ENCODE measurements at regions of chr1 and their contacts with region 1.

Region 1: DNA sequence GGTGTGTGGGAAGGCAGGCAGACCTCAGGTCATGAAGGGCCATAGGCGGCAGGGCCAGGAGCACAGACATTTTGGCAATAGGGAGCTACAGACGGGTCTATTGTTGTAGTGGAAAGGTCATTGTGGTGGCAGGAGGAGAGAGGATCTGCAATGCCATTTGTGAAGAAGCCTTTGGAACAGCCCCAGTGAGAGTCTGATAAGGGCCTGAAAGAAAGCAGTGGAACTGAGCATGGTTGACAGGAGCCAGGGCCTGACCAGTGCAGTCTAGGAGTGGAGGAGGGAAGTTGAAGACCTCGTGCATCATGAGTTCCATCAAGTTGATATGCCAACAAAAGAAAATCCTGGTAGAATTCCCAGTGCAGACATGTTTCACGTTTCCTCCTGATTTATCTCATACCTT is 65.5 kb downstream of the UCK2 start:
- DNase-seq: no peak
- H3K4me3 ChIP-seq: no peak overlapping the region
- H3K27ac ChIP-seq: no peak overlapping the region
- H3K4me1 ChIP-seq: no peaks in the 10 kb centered on the region
- H3K27me3 ChIP-seq: no peaks in the 10 kb centered on the region
- CTCF ChIP-seq: no peak

Region 2: GRCh38 chr1:165824269-165824643 is 68.7 kb before region 1 on chr1:
- CTCF ChIA-PET with region 1: no interaction called
- POLR2A ChIA-PET with region 1: no interaction called
- intact Hi-C with region 1: no loop called
- DNase-seq: no peak
- H3K4me3 ChIP-seq: no peak overlapping the region
- H3K27ac ChIP-seq: no peak overlapping the region
- H3K4me1 ChIP-seq: peaks cover 6% of the 10 kb centered on the region
- H3K27me3 ChIP-seq: no peaks in the 10 kb centered on the region
- CTCF ChIP-seq: no peak

Region 3: DNA sequence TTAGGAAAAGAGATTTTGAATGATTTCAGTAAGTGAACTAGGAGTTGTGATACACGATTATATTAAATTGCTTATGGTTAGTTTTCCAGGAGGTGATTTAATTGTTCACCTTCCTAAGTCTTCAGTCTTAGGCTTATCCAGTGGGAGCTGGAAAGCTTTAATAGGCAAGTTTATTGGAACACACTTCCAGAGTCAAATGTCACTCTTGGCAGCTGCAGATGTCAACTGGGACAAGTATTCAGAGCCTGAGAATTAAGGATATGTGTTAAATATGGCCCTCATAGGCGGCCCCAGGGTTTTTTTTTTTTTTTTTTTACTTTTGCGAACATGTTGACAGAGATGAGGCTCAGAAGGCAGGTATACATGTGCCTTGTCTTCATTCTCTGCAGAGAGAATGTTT is 36.3 kb before region 1 on chr1:
- CTCF ChIA-PET with region 1: interaction called, 11 read pairs
- POLR2A ChIA-PET with region 1: no interaction called
- intact Hi-C with region 1: no loop called
- DNase-seq: no peak
- H3K4me3 ChIP-seq: no peak overlapping the region
- H3K27ac ChIP-seq: no peak overlapping the region
- H3K4me1 ChIP-seq: peaks cover 24% of the 10 kb centered on the region
- H3K27me3 ChIP-seq: no peaks in the 10 kb centered on the region
- CTCF ChIP-seq: no peak

Region 4: GRCh38 chr1:166544561-166544960 is 651.6 kb after region 1 on chr1:
- CTCF ChIA-PET with region 1: no interaction called
- POLR2A ChIA-PET with region 1: no interaction called
- intact Hi-C with region 1: no loop called
- DNase-seq: no peak
- H3K4me3 ChIP-seq: no peak overlapping the region
- H3K27ac ChIP-seq: no peak overlapping the region
- H3K4me1 ChIP-seq: no peaks in the 10 kb centered on the region
- H3K27me3 ChIP-seq: no peaks in the 10 kb centered on the region
- CTCF ChIP-seq: no peak